ENCODE measurements at regions of chr20 and their contacts with region 1.

Region 1: GRCh38 chr20:50929299-50930138 is 1.7 kb downstream of the ADNP start:
- DNase-seq: peak; percentile 95
- H3K4me3 ChIP-seq: peak overlapping the region; percentile 71
- H3K27ac ChIP-seq: peak overlapping the region; percentile 62
- H3K4me1 ChIP-seq: peaks cover 13% of the 10 kb centered on the region
- H3K27me3 ChIP-seq: no peaks in the 10 kb centered on the region
- CTCF ChIP-seq: peak; percentile 94

Region 2: GRCh38 chr20:50267041-50267865 is 662.3 kb before region 1 on chr20:
- intact Hi-C with region 1: no loop called
- DNase-seq: peak; percentile 93
- H3K4me3 ChIP-seq: no peak overlapping the region
- H3K27ac ChIP-seq: peak overlapping the region; percentile 73
- H3K4me1 ChIP-seq: peaks cover 6% of the 10 kb centered on the region
- H3K27me3 ChIP-seq: no peaks in the 10 kb centered on the region
- CTCF ChIP-seq: no peak

Region 3: GRCh38 chr20:50790651-50791277 is 138.8 kb before region 1 on chr20:
- intact Hi-C with region 1: loop called (anchors 5 kb)
- DNase-seq: peak; percentile 96
- H3K4me3 ChIP-seq: no peak overlapping the region
- H3K27ac ChIP-seq: peak overlapping the region; percentile 57
- H3K4me1 ChIP-seq: peaks cover 7% of the 10 kb centered on the region
- H3K27me3 ChIP-seq: no peaks in the 10 kb centered on the region
- CTCF ChIP-seq: peak; percentile 82